ENCODE measurements at regions of chr15 and their contacts with region 1.

Region 1: GRCh38 chr15:72722071-72722696 is 36.2 kb downstream of the BBS4 start:
- DNase-seq: peak; percentile 26 to 67 (median 54)
- ATAC-seq: peak; percentile 65
- H3K4me3 ChIP-seq: no peak overlapping the region
- H3K4me3 Mint-ChIP-seq: no peak overlapping the region
- H3K27ac ChIP-seq: no peak overlapping the region
- H3K27ac Mint-ChIP-seq: peak overlapping the region in 1 of 9 donors; percentile 21
- H3K4me1 ChIP-seq: no peaks in the 10 kb centered on the region
- H3K4me1 Mint-ChIP-seq: peaks cover 0 to 3% (median 0%) of the 10 kb centered on the region in 7 donors
- H3K27me3 ChIP-seq: no peaks in the 10 kb centered on the region
- H3K27me3 Mint-ChIP-seq: no peaks in the 10 kb centered on the region

Region 2: GRCh38 chr15:72740219-72740618 is 18.0 kb after region 1 on chr15:
- CTCF ChIA-PET with region 1: interaction called, 13 read pairs
- POLR2A ChIA-PET with region 1: interaction called, 4 read pairs
- intact Hi-C with region 1: no loop called
- DNase-seq: peak in 7 of 9 donors; percentile 20 to 60 (median 37)
- ATAC-seq: peak; percentile 72
- H3K4me3 ChIP-seq: peak overlapping the region; percentile 2
- H3K4me3 Mint-ChIP-seq: peak overlapping the region; percentile 31 to 81 (median 69)
- H3K27ac ChIP-seq: peak overlapping the region; percentile 59
- H3K27ac Mint-ChIP-seq: peak overlapping the region; percentile 43 to 99 (median 84)
- H3K4me1 ChIP-seq: peaks cover 18 to 20% of the 10 kb centered on the region in 2 donors
- H3K4me1 Mint-ChIP-seq: peaks cover 22 to 47% (median 35%) of the 10 kb centered on the region in 7 donors
- H3K27me3 ChIP-seq: no peaks in the 10 kb centered on the region
- H3K27me3 Mint-ChIP-seq: no peaks in the 10 kb centered on the region

Region 3: GRCh38 chr15:72758182-72758581 is 36.0 kb after region 1 on chr15:
- CTCF ChIA-PET with region 1: no interaction called
- POLR2A ChIA-PET with region 1: no interaction called
- intact Hi-C with region 1: no loop called
- DNase-seq: no peak
- ATAC-seq: no peak
- H3K4me3 ChIP-seq: no peak overlapping the region
- H3K4me3 Mint-ChIP-seq: no peak overlapping the region
- H3K27ac ChIP-seq: no peak overlapping the region
- H3K27ac Mint-ChIP-seq: no peak overlapping the region
- H3K4me1 ChIP-seq: no peaks in the 10 kb centered on the region
- H3K4me1 Mint-ChIP-seq: peaks cover 14 to 46% (median 33%) of the 10 kb centered on the region in 7 donors
- H3K27me3 ChIP-seq: no peaks in the 10 kb centered on the region
- H3K27me3 Mint-ChIP-seq: no peaks in the 10 kb centered on the region

Region 4: GRCh38 chr15:72796515-72797337 is 74.5 kb after region 1 on chr15:
- CTCF ChIA-PET with region 1: interaction called, 4 read pairs
- POLR2A ChIA-PET with region 1: no interaction called
- intact Hi-C with region 1: loop called in 1 of 2 experiments (anchors 5 kb)
- DNase-seq: peak in 7 of 9 donors; percentile 12 to 44 (median 25)
- ATAC-seq: peak; percentile 84
- H3K4me3 ChIP-seq: peak overlapping the region; percentile 61
- H3K4me3 Mint-ChIP-seq: peak overlapping the region; percentile 75 to 90 (median 81)
- H3K27ac ChIP-seq: no peak overlapping the region
- H3K27ac Mint-ChIP-seq: peak overlapping the region in 3 of 9 donors; percentile 46 to 81 (median 67)
- H3K4me1 ChIP-seq: peaks cover 0 to 8% of the 10 kb centered on the region in 2 donors
- H3K4me1 Mint-ChIP-seq: peaks cover 0 to 14% (median 10%) of the 10 kb centered on the region in 7 donors
- H3K27me3 ChIP-seq: no peaks in the 10 kb centered on the region
- H3K27me3 Mint-ChIP-seq: peaks cover 32 to 38% (median 35%) of the 10 kb centered on the region in 5 donors

Region 5: DNA sequence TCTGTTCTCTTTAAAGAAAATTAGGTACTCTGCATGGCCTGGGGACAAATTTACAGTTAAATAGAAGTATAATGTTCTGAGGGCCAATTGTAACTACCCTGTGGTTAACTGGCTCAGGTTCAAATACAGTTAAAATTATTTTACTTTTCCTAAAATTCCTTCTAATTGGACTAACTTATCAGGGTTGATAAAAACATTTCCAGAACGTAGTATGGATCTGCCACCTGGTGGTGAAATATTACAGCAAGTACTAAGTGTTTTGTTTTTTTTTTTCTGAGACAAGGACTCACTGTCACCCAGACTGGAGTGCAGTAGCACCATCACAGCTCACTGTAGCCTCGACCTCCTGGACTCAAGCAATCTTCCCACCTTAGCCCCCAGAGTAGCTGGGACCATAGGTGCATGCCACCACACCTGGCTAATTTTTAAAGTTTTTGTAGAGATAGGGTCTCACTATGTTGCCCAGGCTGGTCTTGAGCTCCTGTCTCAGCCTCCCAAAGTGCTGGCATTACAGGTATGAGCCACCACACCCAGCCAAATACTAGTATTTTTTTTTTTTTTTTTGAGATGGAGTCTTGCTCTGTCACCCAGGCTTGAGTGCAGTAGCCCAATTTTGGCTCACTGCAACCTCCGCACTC is 359.3 kb after region 1 on chr15:
- CTCF ChIA-PET with region 1: interaction called, 27 read pairs
- POLR2A ChIA-PET with region 1: no interaction called
- intact Hi-C with region 1: loop called (anchors 1 kb)
- DNase-seq: peak in 7 of 9 donors; percentile 16 to 56 (median 38)
- ATAC-seq: peak; percentile 63
- H3K4me3 ChIP-seq: no peak overlapping the region
- H3K4me3 Mint-ChIP-seq: no peak overlapping the region
- H3K27ac ChIP-seq: no peak overlapping the region
- H3K27ac Mint-ChIP-seq: no peak overlapping the region
- H3K4me1 ChIP-seq: no peaks in the 10 kb centered on the region
- H3K4me1 Mint-ChIP-seq: peaks cover 0 to 3% (median 0%) of the 10 kb centered on the region in 7 donors
- H3K27me3 ChIP-seq: no peaks in the 10 kb centered on the region
- H3K27me3 Mint-ChIP-seq: peaks cover 0 to 7% (median 0%) of the 10 kb centered on the region in 5 donors

Region 6: GRCh38 chr15:73240866-73241499 is 518.8 kb after region 1 on chr15:
- CTCF ChIA-PET with region 1: interaction called, 3 read pairs
- POLR2A ChIA-PET with region 1: no interaction called
- intact Hi-C with region 1: loop called (anchors 1 to 5 kb)
- DNase-seq: peak; percentile 30 to 72 (median 53)
- ATAC-seq: no peak
- H3K4me3 ChIP-seq: no peak overlapping the region
- H3K4me3 Mint-ChIP-seq: no peak overlapping the region
- H3K27ac ChIP-seq: no peak overlapping the region
- H3K27ac Mint-ChIP-seq: no peak overlapping the region
- H3K4me1 ChIP-seq: no peaks in the 10 kb centered on the region
- H3K4me1 Mint-ChIP-seq: peaks cover 0 to 6% (median 0%) of the 10 kb centered on the region in 7 donors
- H3K27me3 ChIP-seq: no peaks in the 10 kb centered on the region
- H3K27me3 Mint-ChIP-seq: no peaks in the 10 kb centered on the region

Region 7: GRCh38 chr15:73265536-73266153 is 543.5 kb after region 1 on chr15:
- CTCF ChIA-PET with region 1: no interaction called
- POLR2A ChIA-PET with region 1: no interaction called
- intact Hi-C with region 1: loop called (anchors 1 to 5 kb)
- DNase-seq: peak in 8 of 9 donors; percentile 8 to 46 (median 35)
- ATAC-seq: peak; percentile 73
- H3K4me3 ChIP-seq: no peak overlapping the region
- H3K4me3 Mint-ChIP-seq: no peak overlapping the region
- H3K27ac ChIP-seq: no peak overlapping the region
- H3K27ac Mint-ChIP-seq: peak overlapping the region in 1 of 9 donors; percentile 1
- H3K4me1 ChIP-seq: no peaks in the 10 kb centered on the region
- H3K4me1 Mint-ChIP-seq: peaks cover 0 to 4% (median 0%) of the 10 kb centered on the region in 7 donors
- H3K27me3 ChIP-seq: no peaks in the 10 kb centered on the region
- H3K27me3 Mint-ChIP-seq: no peaks in the 10 kb centered on the region

Region 8: GRCh38 chr15:73273181-73274002 is 551.2 kb after region 1 on chr15:
- CTCF ChIA-PET with region 1: interaction called, 5 read pairs
- POLR2A ChIA-PET with region 1: no interaction called
- intact Hi-C with region 1: loop called (anchors 1 to 5 kb)
- DNase-seq: peak in 7 of 9 donors; percentile 3 to 44 (median 32)
- ATAC-seq: peak; percentile 71
- H3K4me3 ChIP-seq: no peak overlapping the region
- H3K4me3 Mint-ChIP-seq: peak overlapping the region in 4 of 10 donors; percentile 4 to 63 (median 26)
- H3K27ac ChIP-seq: no peak overlapping the region
- H3K27ac Mint-ChIP-seq: no peak overlapping the region
- H3K4me1 ChIP-seq: no peaks in the 10 kb centered on the region
- H3K4me1 Mint-ChIP-seq: peaks cover 0 to 4% (median 0%) of the 10 kb centered on the region in 7 donors
- H3K27me3 ChIP-seq: no peaks in the 10 kb centered on the region
- H3K27me3 Mint-ChIP-seq: no peaks in the 10 kb centered on the region

Measured in naive thymus-derived CD4-positive, alpha-beta T cell (primary cell).